ENCODE measurements at regions of chr3 and their contacts with region 1.

Region 1: GRCh38 chr3:184314363-184314699 is at the start of gene EIF4G1:
- DNase-seq: peak; percentile 84 to 98 (median 90)
- ATAC-seq: peak; percentile 83
- H3K4me3 ChIP-seq: peak within 1 kb of the TSS; percentile 77
- H3K4me3 Mint-ChIP-seq: peak within 1 kb of the TSS; percentile 94
- H3K27ac ChIP-seq: peak within 1 kb of the TSS; percentile 84 to 95
- H3K27ac Mint-ChIP-seq: peak within 1 kb of the TSS; percentile 95
- H3K4me1 ChIP-seq: peaks cover 38% of the 10 kb centered on the region
- H3K4me1 Mint-ChIP-seq: peaks cover 27% of the 10 kb centered on the region
- H3K27me3 ChIP-seq: no peaks in the 10 kb centered on the region
- H3K27me3 Mint-ChIP-seq: no peaks in the 10 kb centered on the region
- CTCF ChIP-seq: no peak
- total RNA-seq, gene EIF4G1: 211 to 217 TPM

Region 2: GRCh38 chr3:184335661-184336546 is 21.6 kb after region 1 on chr3:
- CTCF ChIA-PET with region 1: no interaction called
- POLR2A ChIA-PET with region 1: interaction called, 4 read pairs
- intact Hi-C with region 1: loop called (anchors 1 kb)
- DNase-seq: peak; percentile 73 to 94 (median 88)
- ATAC-seq: peak; percentile 70
- H3K4me3 ChIP-seq: peak overlapping the region; percentile 64
- H3K4me3 Mint-ChIP-seq: peak overlapping the region; percentile 95
- H3K27ac ChIP-seq: peak overlapping the region; percentile 88 to 95
- H3K27ac Mint-ChIP-seq: peak overlapping the region; percentile 97
- H3K4me1 ChIP-seq: peaks cover 38% of the 10 kb centered on the region
- H3K4me1 Mint-ChIP-seq: peaks cover 34% of the 10 kb centered on the region
- H3K27me3 ChIP-seq: no peaks in the 10 kb centered on the region
- H3K27me3 Mint-ChIP-seq: no peaks in the 10 kb centered on the region
- CTCF ChIP-seq: no peak

Region 3: DNA sequence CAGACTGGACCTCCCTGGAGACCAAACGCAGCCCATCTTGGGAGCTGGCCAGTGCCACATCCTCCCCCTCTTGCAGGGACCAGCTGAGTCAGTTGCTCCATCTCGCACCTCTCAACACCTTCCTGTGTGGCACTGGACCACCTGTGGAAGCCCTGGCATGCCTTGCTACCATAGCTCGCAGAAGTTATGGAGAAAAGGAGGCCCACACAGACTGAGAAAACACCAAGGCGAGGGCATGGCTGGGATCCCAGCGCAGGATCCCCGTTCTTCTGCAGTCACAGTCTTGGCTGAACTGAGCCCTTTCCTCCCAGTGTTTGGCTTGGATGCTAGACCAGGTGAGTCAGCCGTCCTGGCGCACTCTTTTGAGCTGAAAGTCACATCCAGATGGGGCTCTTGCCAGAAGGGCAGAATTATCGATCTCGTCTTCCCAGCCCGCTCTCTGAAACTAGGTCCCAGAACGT is 112.4 kb after region 1 on chr3:
- CTCF ChIA-PET with region 1: no interaction called
- POLR2A ChIA-PET with region 1: no interaction called
- intact Hi-C with region 1: no loop called
- DNase-seq: no peak
- ATAC-seq: no peak
- H3K4me3 ChIP-seq: no peak overlapping the region
- H3K4me3 Mint-ChIP-seq: no peak overlapping the region
- H3K27ac ChIP-seq: no peak overlapping the region
- H3K27ac Mint-ChIP-seq: no peak overlapping the region
- H3K4me1 ChIP-seq: no peaks in the 10 kb centered on the region
- H3K4me1 Mint-ChIP-seq: no peaks in the 10 kb centered on the region
- H3K27me3 ChIP-seq: peaks cover 0 to 3% of the 10 kb centered on the region in 2 experiments
- H3K27me3 Mint-ChIP-seq: peaks cover 20% of the 10 kb centered on the region
- CTCF ChIP-seq: no peak